MCF 10A (cell line): ENCODE measurements at regions of chr6 and their contacts with region 1.

Region 1: DNA sequence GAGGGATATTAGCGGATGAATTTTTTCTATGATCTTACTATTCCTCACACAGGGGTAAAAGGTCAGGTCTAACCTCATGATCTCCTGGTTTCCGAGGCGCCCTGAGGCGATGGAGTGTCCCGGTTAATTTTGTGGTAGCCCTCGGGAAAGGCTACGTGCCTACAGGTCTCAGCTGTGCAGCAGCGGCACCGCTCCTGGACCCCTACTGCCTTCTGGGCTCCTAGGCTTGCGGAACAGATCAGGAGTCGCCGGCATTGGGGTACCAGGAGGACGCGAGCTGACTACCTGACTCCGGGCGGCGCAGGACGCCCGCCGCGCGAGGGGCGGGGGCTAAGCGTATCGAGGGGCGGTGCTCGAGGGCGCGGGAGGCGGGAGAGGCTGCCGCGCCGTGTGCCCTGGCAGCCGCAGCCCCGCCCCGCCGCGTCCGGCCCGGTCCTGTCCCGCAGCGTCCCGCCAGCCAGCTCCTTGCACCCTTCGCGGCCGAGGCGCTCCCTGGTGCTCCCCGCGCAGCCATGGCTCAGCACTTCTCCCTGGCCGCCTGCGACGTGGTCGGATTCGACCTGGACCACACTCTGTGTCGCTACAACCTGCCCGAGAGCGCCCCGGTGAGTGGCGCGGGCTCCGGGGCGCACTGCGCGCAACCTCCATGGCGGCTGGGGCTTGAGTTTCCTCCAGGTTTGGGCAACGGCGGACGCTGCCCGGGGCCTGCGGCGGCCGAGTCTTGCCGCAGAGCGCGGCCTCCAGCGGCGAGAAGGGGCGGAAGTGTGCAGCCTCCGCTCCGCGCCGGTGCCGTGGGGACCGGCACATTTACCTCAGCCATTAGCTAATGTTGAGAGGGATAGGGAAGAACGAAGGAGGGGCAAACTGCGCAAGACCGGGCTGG is at the start of gene NT5DC1:
- DNase-seq: peak; percentile 86
- H3K4me3 Mint-ChIP-seq: peak within 1 kb of the TSS; percentile 93
- H3K27ac Mint-ChIP-seq: peak within 1 kb of the TSS; percentile 71
- H3K4me1 Mint-ChIP-seq: peaks cover 23% of the 10 kb centered on the region
- H3K27me3 Mint-ChIP-seq: no peaks in the 10 kb centered on the region
- CTCF ChIP-seq: peak; percentile 36
- total RNA-seq, gene NT5DC1: 16.5 and 27.6 TPM in 2 replicates

Region 2: DNA sequence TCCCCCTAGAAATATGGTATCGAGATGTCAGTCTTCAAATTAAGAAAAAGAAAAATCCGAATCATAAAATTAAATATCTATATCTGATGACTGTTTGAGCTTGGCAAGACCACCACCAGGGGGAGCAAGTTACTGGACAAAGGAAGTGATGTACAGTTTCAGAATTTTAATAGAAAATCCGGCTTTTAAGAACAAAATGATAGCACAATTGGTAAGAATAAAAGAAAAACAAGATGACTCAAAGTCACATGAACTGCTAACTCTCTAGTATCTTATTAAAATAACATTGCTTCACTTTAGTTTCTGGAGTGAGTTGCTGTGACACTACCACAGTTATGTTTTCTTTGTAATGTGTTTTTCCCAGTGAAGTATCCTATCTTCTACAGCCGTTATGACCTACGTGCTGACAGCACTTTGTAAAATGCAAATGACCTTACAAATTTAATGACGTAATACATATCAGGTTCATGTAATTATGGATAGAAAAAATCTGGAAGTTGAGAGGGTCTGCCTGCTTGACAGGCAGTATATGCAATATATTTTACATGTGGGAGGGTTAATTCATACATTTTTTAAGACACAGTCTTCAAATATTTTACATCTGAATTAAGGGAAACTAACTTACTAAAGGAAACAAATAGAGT is 1352.6 kb before region 1 on chr6:
- CTCF ChIA-PET with region 1: interaction called, 3 read pairs
- POLR2A ChIA-PET with region 1: no interaction called
- intact Hi-C with region 1: loop called (anchors 5 kb)
- DNase-seq: peak; percentile 63
- H3K4me3 Mint-ChIP-seq: no peak overlapping the region
- H3K27ac Mint-ChIP-seq: no peak overlapping the region
- H3K4me1 Mint-ChIP-seq: no peaks in the 10 kb centered on the region
- H3K27me3 Mint-ChIP-seq: peaks cover 40% of the 10 kb centered on the region
- CTCF ChIP-seq: peak; percentile 76

Region 3: GRCh38 chr6:116016846-116017545 is 83.7 kb before region 1 on chr6:
- CTCF ChIA-PET with region 1: interaction called, 88 read pairs
- POLR2A ChIA-PET with region 1: interaction called, 25 read pairs
- intact Hi-C with region 1: no loop called
- DNase-seq: peak; percentile 14
- H3K4me3 Mint-ChIP-seq: no peak overlapping the region
- H3K27ac Mint-ChIP-seq: peak overlapping the region; percentile 36
- H3K4me1 Mint-ChIP-seq: peaks cover 35% of the 10 kb centered on the region
- H3K27me3 Mint-ChIP-seq: no peaks in the 10 kb centered on the region
- CTCF ChIP-seq: no peak

Region 4: GRCh38 chr6:116060572-116061283 is 39.9 kb before region 1 on chr6 and contains the start of gene FRK:
- CTCF ChIA-PET with region 1: interaction called, 18 read pairs
- POLR2A ChIA-PET with region 1: interaction called, 66 read pairs
- intact Hi-C with region 1: loop called (anchors 1 kb)
- DNase-seq: peak; percentile 79
- H3K4me3 Mint-ChIP-seq: peak within 1 kb of the TSS; percentile 76
- H3K27ac Mint-ChIP-seq: peak within 1 kb of the TSS; percentile 96
- H3K4me1 Mint-ChIP-seq: peaks cover 28% of the 10 kb centered on the region
- H3K27me3 Mint-ChIP-seq: no peaks in the 10 kb centered on the region
- CTCF ChIP-seq: peak; percentile 29
- total RNA-seq, gene FRK: 0.82 and 0.98 TPM in 2 replicates

Region 5: GRCh38 chr6:116111552-116112528 is 11.2 kb after region 1 on chr6:
- CTCF ChIA-PET with region 1: interaction called, 12 read pairs
- POLR2A ChIA-PET with region 1: interaction called, 7 read pairs
- intact Hi-C with region 1: no loop called
- DNase-seq: peak; percentile 63
- H3K4me3 Mint-ChIP-seq: no peak overlapping the region
- H3K27ac Mint-ChIP-seq: no peak overlapping the region
- H3K4me1 Mint-ChIP-seq: no peaks in the 10 kb centered on the region
- H3K27me3 Mint-ChIP-seq: no peaks in the 10 kb centered on the region
- CTCF ChIP-seq: peak; percentile 48

Region 6: GRCh38 chr6:116253505-116254296 is 153.0 kb after region 1 on chr6 and contains the start of gene TSPYL4:
- CTCF ChIA-PET with region 1: interaction called, 7 read pairs
- POLR2A ChIA-PET with region 1: interaction called, 16 read pairs
- intact Hi-C with region 1: no loop called
- DNase-seq: peak; percentile 96
- H3K4me3 Mint-ChIP-seq: no peak within 1 kb of the TSS
- H3K27ac Mint-ChIP-seq: no peak within 1 kb of the TSS
- H3K4me1 Mint-ChIP-seq: peaks cover 22% of the 10 kb centered on the region
- H3K27me3 Mint-ChIP-seq: no peaks in the 10 kb centered on the region
- CTCF ChIP-seq: no peak
- total RNA-seq, gene TSPYL4: 9.1 and 9.8 TPM in 2 replicates